AG04450 (cell line): ENCODE measurements at regions of chr14 and their contacts with region 1.

Region 1: DNA sequence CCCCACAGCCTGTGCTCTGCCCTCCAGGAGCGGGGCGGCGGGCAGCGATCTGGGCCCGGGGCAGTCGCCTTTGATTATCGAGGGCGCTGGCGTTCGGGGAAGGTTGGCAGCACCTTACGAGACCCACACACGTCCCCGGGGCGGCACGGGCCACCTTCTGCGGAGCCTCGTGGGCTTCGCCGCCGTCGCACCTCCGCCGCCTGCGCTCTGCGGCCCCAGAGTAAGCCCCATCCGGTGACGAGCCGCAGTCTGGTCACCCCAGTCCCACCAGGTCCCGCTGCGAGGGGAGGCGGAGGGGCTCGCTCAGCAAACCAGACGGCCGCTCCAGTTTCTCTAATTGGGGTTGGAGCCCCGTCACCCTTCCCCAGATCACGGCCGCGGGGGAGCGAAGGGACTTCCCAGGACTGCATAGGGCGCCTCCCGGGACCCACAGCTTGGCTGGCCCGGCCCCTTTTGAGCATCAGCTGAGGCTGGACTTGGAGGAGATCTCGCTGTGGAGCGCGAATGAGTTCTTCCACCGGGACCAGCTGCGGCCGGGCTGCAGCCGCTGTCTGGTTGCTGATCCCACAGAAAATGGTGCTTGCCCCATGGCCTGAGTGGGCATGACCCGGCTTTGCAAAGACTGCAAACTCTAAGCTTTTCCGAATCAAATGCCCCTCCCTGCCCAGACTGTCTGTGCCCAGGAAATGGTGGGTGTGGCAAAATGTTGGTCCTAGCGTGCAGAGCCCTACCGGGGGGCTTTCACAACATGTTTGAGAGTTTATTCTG is 560 bp downstream of the LGALS3 start:
- DNase-seq: no peak
- H3K4me3 ChIP-seq: peak overlapping the region; percentile 78
- H3K27ac ChIP-seq: peak overlapping the region; percentile 72
- H3K27me3 ChIP-seq: no peaks in the 10 kb centered on the region
- CTCF ChIP-seq: no peak

Region 2: DNA sequence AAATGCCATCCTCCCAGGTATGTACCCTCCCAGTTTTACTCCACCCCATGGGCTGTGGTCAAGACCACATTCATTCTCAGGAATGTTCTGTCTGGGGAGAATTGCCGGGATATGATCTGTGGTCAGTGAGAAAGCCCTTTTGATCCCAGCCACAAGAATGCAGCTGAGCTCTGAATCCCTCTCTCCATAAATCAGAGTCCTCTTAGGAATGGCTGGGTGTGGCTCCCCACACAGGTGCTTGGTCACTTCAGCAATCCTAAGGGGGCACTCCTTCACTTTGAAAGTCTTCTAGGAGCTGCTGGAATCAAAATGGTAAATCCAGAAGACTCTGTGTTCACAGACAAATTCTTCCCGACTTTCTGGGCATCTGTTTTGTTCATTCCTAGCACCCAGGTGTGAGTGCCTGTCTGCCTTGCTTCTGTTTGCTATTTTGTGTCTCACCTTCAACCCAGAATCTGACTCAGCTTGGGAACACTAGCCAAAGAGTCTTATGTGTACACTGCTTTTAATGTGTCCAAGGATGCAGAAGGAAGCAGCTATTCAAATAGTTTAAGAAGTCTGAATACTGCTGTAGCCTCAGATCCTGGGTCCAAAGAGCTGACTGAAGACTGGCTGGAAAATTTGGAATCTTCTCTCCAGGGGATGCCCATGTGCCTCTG is 877.4 kb before region 1 on chr14:
- CTCF ChIA-PET with region 1: no interaction called
- POLR2A ChIA-PET with region 1: no interaction called
- DNase-seq: peak; percentile 15
- H3K4me3 ChIP-seq: no peak overlapping the region
- H3K27ac ChIP-seq: no peak overlapping the region
- H3K27me3 ChIP-seq: peaks cover 10% of the 10 kb centered on the region
- CTCF ChIP-seq: no peak

Region 3: GRCh38 chr14:55102141-55102621 is 27.4 kb before region 1 on chr14:
- CTCF ChIA-PET with region 1: no interaction called
- POLR2A ChIA-PET with region 1: interaction called, 33 read pairs
- DNase-seq: peak; percentile 84
- H3K4me3 ChIP-seq: no peak overlapping the region
- H3K27ac ChIP-seq: peak overlapping the region; percentile 85
- H3K27me3 ChIP-seq: no peaks in the 10 kb centered on the region
- CTCF ChIP-seq: no peak

Region 4: GRCh38 chr14:55107766-55108554 is 21.7 kb before region 1 on chr14:
- CTCF ChIA-PET with region 1: no interaction called
- POLR2A ChIA-PET with region 1: interaction called, 33 read pairs
- DNase-seq: peak; percentile 93
- H3K4me3 ChIP-seq: peak overlapping the region; percentile 38
- H3K27ac ChIP-seq: peak overlapping the region; percentile 100
- H3K27me3 ChIP-seq: no peaks in the 10 kb centered on the region
- CTCF ChIP-seq: no peak

Region 5: GRCh38 chr14:55118761-55119160 is 10.9 kb before region 1 on chr14:
- CTCF ChIA-PET with region 1: no interaction called
- POLR2A ChIA-PET with region 1: no interaction called
- DNase-seq: no peak
- H3K4me3 ChIP-seq: no peak overlapping the region
- H3K27ac ChIP-seq: no peak overlapping the region
- H3K27me3 ChIP-seq: no peaks in the 10 kb centered on the region
- CTCF ChIP-seq: no peak

Region 6: GRCh38 chr14:55180434-55180833 is 50.8 kb after region 1 on chr14:
- CTCF ChIA-PET with region 1: no interaction called
- POLR2A ChIA-PET with region 1: no interaction called
- DNase-seq: no peak
- H3K4me3 ChIP-seq: no peak overlapping the region
- H3K27ac ChIP-seq: no peak overlapping the region
- H3K27me3 ChIP-seq: no peaks in the 10 kb centered on the region
- CTCF ChIP-seq: no peak